Ovary (tissue), 10 donors: ENCODE measurements at regions of chr11 and their contacts with region 1.

Region 1: DNA sequence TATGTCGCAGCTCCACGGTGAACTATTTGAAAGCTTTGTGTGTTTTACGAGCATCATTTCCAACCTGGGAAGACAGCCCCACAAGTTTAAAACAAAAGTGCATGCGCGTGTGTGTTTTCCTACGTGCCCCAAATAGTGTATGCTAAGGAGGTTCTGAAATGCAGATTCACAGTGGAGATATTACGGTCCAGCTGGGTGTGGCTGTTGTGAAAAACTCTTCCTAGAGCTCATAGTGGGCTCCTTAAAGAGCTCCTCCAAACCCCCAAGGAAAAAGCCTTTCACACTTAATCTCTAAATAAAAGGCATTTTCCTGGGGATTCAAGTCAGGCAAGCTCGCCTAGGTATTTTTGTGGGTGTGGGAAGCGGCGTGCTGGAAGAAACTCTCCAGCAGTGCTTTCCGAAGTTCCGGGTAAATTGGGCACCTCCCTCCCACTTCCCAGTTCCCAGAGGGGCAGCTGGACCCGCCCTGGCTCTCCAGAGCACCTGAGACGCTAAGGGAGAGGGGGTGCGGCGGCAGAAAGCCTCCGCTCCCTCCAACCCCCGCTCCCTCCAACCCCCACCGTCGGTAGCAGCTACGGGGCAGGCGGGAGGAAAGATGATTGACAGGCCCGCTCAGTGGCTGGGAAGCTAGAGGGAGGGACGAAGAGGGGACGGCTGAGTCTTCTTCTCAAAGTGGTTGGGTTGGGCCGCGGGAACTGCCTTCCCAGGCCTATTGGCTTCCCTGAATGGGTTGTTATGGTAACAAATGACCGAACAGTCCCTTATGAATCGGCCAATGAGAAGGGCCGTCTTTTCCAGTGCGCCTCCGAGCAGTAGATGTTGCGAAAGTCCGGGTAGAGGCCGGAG is 558 bp upstream of the PCF11 start:
- DNase-seq: peak; percentile 99
- H3K4me3 ChIP-seq: peak overlapping the region; percentile 77
- H3K27ac ChIP-seq: peak overlapping the region; percentile 73 to 90
- H3K4me1 ChIP-seq: peaks cover 3% of the 10 kb centered on the region
- H3K27me3 ChIP-seq: no peaks in the 10 kb centered on the region
- CTCF ChIP-seq: no peak
- EP300 ChIP-seq: no peak
- POLR2A ChIP-seq: peak; percentile 97

Region 2: DNA sequence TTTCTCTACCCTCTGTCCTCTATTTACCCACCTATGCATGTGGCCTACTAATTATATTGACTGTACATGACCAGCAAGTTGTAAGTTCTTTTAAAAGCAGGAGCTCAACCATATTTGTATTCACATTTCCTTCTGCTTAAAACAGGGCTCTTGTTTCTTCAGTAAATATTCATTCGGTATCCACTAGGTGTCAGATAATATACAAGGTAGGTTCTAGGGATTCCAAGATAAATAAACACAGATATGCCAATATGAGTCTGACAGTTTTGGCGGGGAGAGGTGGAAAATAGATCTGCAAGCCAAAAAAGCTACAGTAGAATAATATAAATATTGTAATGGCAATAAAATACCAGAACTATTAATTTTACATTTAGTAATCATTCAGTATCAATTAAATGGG is 69.3 kb before region 1 on chr11:
- intact Hi-C with region 1: loop called in 1 of 4 experiments (anchors 10 kb)
- DNase-seq: no peak
- H3K4me3 ChIP-seq: no peak overlapping the region
- H3K27ac ChIP-seq: no peak overlapping the region
- H3K4me1 ChIP-seq: peaks cover 5% of the 10 kb centered on the region
- H3K27me3 ChIP-seq: no peaks in the 10 kb centered on the region
- CTCF ChIP-seq: no peak
- EP300 ChIP-seq: no peak
- POLR2A ChIP-seq: no peak

Region 3: GRCh38 chr11:83193315-83194280 is 37.2 kb after region 1 on chr11 and contains the start of gene ANKRD42:
- intact Hi-C with region 1: loop called in 1 of 4 experiments (anchors 5 kb)
- DNase-seq: peak; percentile 90 to 93 (median 92)
- H3K4me3 ChIP-seq: peak within 1 kb of the TSS; percentile 94
- H3K27ac ChIP-seq: peak within 1 kb of the TSS; percentile 70 to 75
- H3K4me1 ChIP-seq: peaks cover 4% of the 10 kb centered on the region
- H3K27me3 ChIP-seq: no peaks in the 10 kb centered on the region
- CTCF ChIP-seq: no peak
- EP300 ChIP-seq: peak; percentile 32
- POLR2A ChIP-seq: peak; percentile 88
- total RNA-seq, gene ANKRD42: 12.4 to 21.7 (median 14.0) TPM